ENCODE measurements at regions of chr16 and their contacts with region 1.

Region 1: DNA sequence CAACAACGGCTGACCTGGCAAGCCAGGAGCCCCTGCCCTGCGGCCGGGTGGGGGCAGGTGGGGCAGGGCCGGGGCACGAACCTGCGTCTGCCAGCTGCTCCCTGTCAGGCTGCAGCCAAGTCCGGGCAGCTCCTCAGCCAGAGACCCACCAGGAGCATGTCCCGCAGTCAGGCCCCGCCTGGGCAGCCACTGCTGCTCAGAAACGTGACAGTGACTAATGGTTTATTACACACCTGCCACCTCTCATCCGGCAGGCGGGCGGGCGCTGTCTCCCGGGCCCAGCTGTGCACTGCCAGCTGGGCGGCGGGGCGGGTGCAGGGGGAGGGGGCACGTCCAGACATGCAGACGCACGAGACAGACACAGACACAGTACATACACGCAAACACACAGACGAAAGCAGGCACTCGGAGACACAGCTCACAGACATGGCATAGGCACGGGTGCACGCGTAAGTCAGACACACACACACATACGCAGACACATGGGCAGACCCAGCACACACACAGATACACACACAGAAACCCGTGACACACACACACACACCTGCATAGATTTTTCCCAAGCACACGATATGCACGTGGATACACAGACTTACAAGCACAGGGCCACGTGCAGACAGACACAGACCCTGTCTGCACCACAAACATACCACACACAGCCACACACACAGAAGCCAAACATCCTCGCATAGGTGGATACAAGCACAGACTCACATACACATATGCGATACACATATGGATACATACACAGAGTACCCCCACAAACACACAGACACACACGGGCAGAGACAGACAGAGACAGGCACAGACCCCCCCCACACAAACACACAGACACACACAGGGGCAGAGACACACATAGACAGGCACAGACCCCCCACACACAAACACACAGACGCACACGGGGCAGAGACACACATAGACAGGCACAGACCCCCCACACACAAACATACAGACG is 248.3 kb upstream of the CIBAR2 start:
- DNase-seq: peak; percentile 78
- H3K4me3 ChIP-seq: no peak overlapping the region
- H3K27ac ChIP-seq: no peak overlapping the region
- H3K4me1 ChIP-seq: peaks cover 33% of the 10 kb centered on the region
- H3K27me3 ChIP-seq: no peaks in the 10 kb centered on the region
- CTCF ChIP-seq: no peak

Region 2: DNA sequence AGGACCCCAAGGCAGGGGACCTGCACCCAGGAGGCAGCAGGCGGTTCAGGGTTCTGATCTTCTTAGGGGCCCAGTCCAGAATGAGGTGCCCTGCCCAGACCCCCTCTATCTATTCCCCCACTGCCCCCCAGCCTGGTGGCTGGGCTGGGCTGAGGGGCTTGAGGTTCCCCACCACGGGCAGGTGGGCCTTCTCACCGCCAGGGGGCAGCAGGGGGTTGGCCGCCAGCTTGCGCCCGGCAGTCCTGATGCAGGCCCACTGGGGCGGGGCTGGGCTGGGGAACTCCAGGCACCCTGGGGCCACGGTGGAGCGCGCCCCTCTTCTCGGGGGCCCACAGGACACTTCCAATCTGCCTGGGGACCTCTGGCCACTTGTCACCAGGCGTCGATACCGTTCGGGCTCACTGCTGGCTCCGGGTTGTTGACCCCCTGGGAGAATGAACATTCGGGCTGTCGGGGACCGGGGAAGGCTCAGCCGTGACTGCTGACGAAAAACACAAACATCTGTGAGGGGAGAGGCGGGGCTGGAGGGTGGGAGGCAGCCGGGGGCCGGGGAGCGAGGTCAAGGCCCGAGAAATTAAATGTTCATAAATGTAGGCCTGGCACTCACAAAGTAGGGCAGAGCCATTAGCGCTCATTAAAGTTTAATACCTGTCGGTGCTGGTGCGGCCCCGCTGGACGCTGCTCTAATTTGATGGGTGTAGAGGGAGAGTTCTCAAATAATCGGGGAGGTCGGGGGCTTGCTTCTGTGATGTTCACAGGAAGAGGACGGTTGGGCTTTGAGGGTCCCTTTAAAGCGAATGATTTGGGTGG is 33.3 kb after region 1 on chr16:
- CTCF ChIA-PET with region 1: no interaction called
- dilution Hi-C with region 1: no loop called
- in situ Hi-C with region 1: no loop called
- intact Hi-C with region 1: loop called (anchors 5 kb)
- DNase-seq: no peak
- H3K4me3 ChIP-seq: no peak overlapping the region
- H3K27ac ChIP-seq: no peak overlapping the region
- H3K4me1 ChIP-seq: peaks cover 54% of the 10 kb centered on the region
- H3K27me3 ChIP-seq: no peaks in the 10 kb centered on the region
- CTCF ChIP-seq: peak; percentile 31 to 49

Measured in mammary epithelial cell (primary cell).